CD4-positive, alpha-beta memory T cell (primary cell): ENCODE measurements at regions of chr1 and their contacts with region 1.

Region 1: GRCh38 chr1:6889875-6890480 is 104.7 kb downstream of the CAMTA1 start:
- DNase-seq: peak in 4 of 5 donors; percentile 4 to 23 (median 14)
- H3K4me3 ChIP-seq: no peak overlapping the region
- H3K4me3 Mint-ChIP-seq: no peak overlapping the region
- H3K27ac ChIP-seq: no peak overlapping the region
- H3K27ac Mint-ChIP-seq: no peak overlapping the region
- H3K4me1 ChIP-seq: no peaks in the 10 kb centered on the region
- H3K4me1 Mint-ChIP-seq: peaks cover 0 to 2% (median under 1%) of the 10 kb centered on the region in 4 donors
- H3K27me3 ChIP-seq: no peaks in the 10 kb centered on the region
- H3K27me3 Mint-ChIP-seq: no peaks in the 10 kb centered on the region

Region 2: GRCh38 chr1:6794164-6794563 is 95.8 kb before region 1 on chr1:
- CTCF ChIA-PET with region 1: no interaction called
- POLR2A ChIA-PET with region 1: no interaction called
- intact Hi-C with region 1: loop called (anchors 2 kb)
- DNase-seq: peak in 4 of 5 donors; percentile 17 to 31 (median 26)
- H3K4me3 ChIP-seq: no peak overlapping the region
- H3K4me3 Mint-ChIP-seq: no peak overlapping the region
- H3K27ac ChIP-seq: no peak overlapping the region
- H3K27ac Mint-ChIP-seq: no peak overlapping the region
- H3K4me1 ChIP-seq: peaks cover 5% of the 10 kb centered on the region
- H3K4me1 Mint-ChIP-seq: peaks cover 13 to 39% (median 29%) of the 10 kb centered on the region in 4 donors
- H3K27me3 ChIP-seq: no peaks in the 10 kb centered on the region
- H3K27me3 Mint-ChIP-seq: no peaks in the 10 kb centered on the region